ENCODE measurements at regions of chr12 and their contacts with region 1.

Region 1: GRCh38 chr12:49698619-49699545 is 8.3 kb downstream of the FMNL3 start:
- DNase-seq: peak; percentile 80
- ATAC-seq: peak; percentile 84
- H3K4me3 ChIP-seq: peak overlapping the region; percentile 24 to 53 (median 42)
- H3K4me3 Mint-ChIP-seq: peak overlapping the region; percentile 89
- H3K27ac ChIP-seq: peak overlapping the region; percentile 62 to 85
- H3K27ac Mint-ChIP-seq: peak overlapping the region; percentile 92
- H3K4me1 ChIP-seq: peaks cover 70 to 72% of the 10 kb centered on the region in 2 donors
- H3K4me1 Mint-ChIP-seq: peaks cover 72% of the 10 kb centered on the region
- H3K27me3 ChIP-seq: no peaks in the 10 kb centered on the region
- H3K27me3 Mint-ChIP-seq: no peaks in the 10 kb centered on the region
- CTCF ChIP-seq: no peak

Region 2: GRCh38 chr12:49662998-49663843 is 35.7 kb before region 1 on chr12:
- CTCF ChIA-PET with region 1: interaction called, 89 read pairs
- POLR2A ChIA-PET with region 1: interaction called, 10 read pairs
- intact Hi-C with region 1: loop called (anchors 1 kb)
- DNase-seq: peak; percentile 84
- ATAC-seq: peak; percentile 89
- H3K4me3 ChIP-seq: peak overlapping the region; percentile 0 to 65 (median 36)
- H3K4me3 Mint-ChIP-seq: peak overlapping the region; percentile 85
- H3K27ac ChIP-seq: peak overlapping the region; percentile 78 to 95
- H3K27ac Mint-ChIP-seq: peak overlapping the region; percentile 97
- H3K4me1 ChIP-seq: peaks cover 77 to 86% of the 10 kb centered on the region in 2 donors
- H3K4me1 Mint-ChIP-seq: peaks cover 82% of the 10 kb centered on the region
- H3K27me3 ChIP-seq: no peaks in the 10 kb centered on the region
- H3K27me3 Mint-ChIP-seq: no peaks in the 10 kb centered on the region
- CTCF ChIP-seq: no peak

Region 3: GRCh38 chr12:49673446-49674317 is 25.2 kb before region 1 on chr12:
- CTCF ChIA-PET with region 1: interaction called, 37 read pairs
- POLR2A ChIA-PET with region 1: interaction called, 7 read pairs
- intact Hi-C with region 1: loop called (anchors 2 kb)
- DNase-seq: no peak
- ATAC-seq: no peak
- H3K4me3 ChIP-seq: no peak overlapping the region
- H3K4me3 Mint-ChIP-seq: peak overlapping the region; percentile 34
- H3K27ac ChIP-seq: peak overlapping the region; percentile 92 to 95
- H3K27ac Mint-ChIP-seq: peak overlapping the region; percentile 87
- H3K4me1 ChIP-seq: peaks cover 64 to 67% of the 10 kb centered on the region in 2 donors
- H3K4me1 Mint-ChIP-seq: peaks cover 84% of the 10 kb centered on the region
- H3K27me3 ChIP-seq: no peaks in the 10 kb centered on the region
- H3K27me3 Mint-ChIP-seq: no peaks in the 10 kb centered on the region
- CTCF ChIP-seq: no peak

Region 4: GRCh38 chr12:49680075-49680474 is 18.8 kb before region 1 on chr12:
- CTCF ChIA-PET with region 1: interaction called, 16 read pairs
- POLR2A ChIA-PET with region 1: interaction called, 4 read pairs
- intact Hi-C with region 1: loop called (anchors 2 kb)
- DNase-seq: no peak
- ATAC-seq: no peak
- H3K4me3 ChIP-seq: no peak overlapping the region
- H3K4me3 Mint-ChIP-seq: no peak overlapping the region
- H3K27ac ChIP-seq: peak overlapping the region in 1 of 2 donors; percentile 14
- H3K27ac Mint-ChIP-seq: no peak overlapping the region
- H3K4me1 ChIP-seq: peaks cover 36 to 42% of the 10 kb centered on the region in 2 donors
- H3K4me1 Mint-ChIP-seq: peaks cover 65% of the 10 kb centered on the region
- H3K27me3 ChIP-seq: no peaks in the 10 kb centered on the region
- H3K27me3 Mint-ChIP-seq: no peaks in the 10 kb centered on the region
- CTCF ChIP-seq: no peak

Region 5: GRCh38 chr12:49687941-49688340 is 10.9 kb before region 1 on chr12:
- CTCF ChIA-PET with region 1: interaction called, 28 read pairs
- POLR2A ChIA-PET with region 1: interaction called, 4 read pairs
- intact Hi-C with region 1: loop called (anchors 1 kb)
- DNase-seq: no peak
- ATAC-seq: no peak
- H3K4me3 ChIP-seq: no peak overlapping the region
- H3K4me3 Mint-ChIP-seq: no peak overlapping the region
- H3K27ac ChIP-seq: no peak overlapping the region
- H3K27ac Mint-ChIP-seq: no peak overlapping the region
- H3K4me1 ChIP-seq: peaks cover 51% of the 10 kb centered on the region in 2 donors
- H3K4me1 Mint-ChIP-seq: peaks cover 65% of the 10 kb centered on the region
- H3K27me3 ChIP-seq: no peaks in the 10 kb centered on the region
- H3K27me3 Mint-ChIP-seq: no peaks in the 10 kb centered on the region
- CTCF ChIP-seq: no peak

Region 6: DNA sequence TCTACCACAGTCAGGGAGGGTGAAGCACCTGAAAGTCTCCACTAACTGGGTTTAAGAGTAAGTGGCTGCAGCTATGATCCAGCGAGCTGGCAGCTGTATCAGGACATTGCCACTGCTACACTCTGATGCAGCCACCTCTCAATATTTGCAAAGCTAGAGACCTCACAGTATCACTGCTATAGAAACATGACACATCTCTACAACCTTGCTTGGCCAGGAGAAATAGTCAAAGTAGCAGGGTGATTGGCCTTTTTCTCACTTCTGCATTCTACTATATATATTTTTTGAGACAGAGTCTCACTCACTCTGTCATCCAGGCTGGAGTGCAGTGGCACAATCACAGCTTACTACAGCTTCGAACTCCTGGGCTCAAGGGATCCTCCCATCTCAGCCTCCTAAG is 17.7 kb after region 1 on chr12:
- CTCF ChIA-PET with region 1: no interaction called
- POLR2A ChIA-PET with region 1: no interaction called
- intact Hi-C with region 1: no loop called
- DNase-seq: peak; percentile 28
- ATAC-seq: peak; percentile 70
- H3K4me3 ChIP-seq: no peak overlapping the region
- H3K4me3 Mint-ChIP-seq: no peak overlapping the region
- H3K27ac ChIP-seq: no peak overlapping the region
- H3K27ac Mint-ChIP-seq: no peak overlapping the region
- H3K4me1 ChIP-seq: peaks cover 5 to 10% of the 10 kb centered on the region in 2 donors
- H3K4me1 Mint-ChIP-seq: peaks cover 2% of the 10 kb centered on the region
- H3K27me3 ChIP-seq: peaks cover 0 to 11% (median under 1%) of the 10 kb centered on the region in 4 experiments
- H3K27me3 Mint-ChIP-seq: peaks cover 11% of the 10 kb centered on the region
- CTCF ChIP-seq: no peak